Left colon (tissue), 2 donors: ENCODE measurements at regions of chr1 and their contacts with region 1.

Region 1: GRCh38 chr1:115138968-115139367 is 49.7 kb upstream of the TSPAN2 start:
- DNase-seq: peak; percentile 81 to 86
- ATAC-seq: peak; percentile 99

Region 2: DNA sequence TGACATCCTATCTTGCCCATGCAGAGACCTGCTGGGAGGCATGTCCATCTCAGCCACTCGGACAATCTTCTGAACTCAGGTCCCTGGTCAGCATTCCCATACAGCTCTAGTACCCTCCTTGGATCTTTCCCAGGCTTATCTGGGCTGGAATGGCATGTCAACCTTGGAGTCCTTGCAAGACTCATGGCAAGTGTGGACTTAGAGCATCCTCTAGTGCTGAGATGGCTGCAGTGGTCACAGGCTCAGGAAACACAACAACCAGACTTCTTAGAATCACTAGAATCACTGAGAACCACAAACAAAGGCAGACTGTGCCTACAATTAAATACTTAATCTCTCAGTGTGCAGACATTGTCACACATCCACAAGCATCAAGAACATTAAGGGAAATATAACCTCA is 182.4 kb before region 1 on chr1:
- intact Hi-C with region 1: no loop called
- DNase-seq: no peak
- ATAC-seq: no peak

Region 3: DNA sequence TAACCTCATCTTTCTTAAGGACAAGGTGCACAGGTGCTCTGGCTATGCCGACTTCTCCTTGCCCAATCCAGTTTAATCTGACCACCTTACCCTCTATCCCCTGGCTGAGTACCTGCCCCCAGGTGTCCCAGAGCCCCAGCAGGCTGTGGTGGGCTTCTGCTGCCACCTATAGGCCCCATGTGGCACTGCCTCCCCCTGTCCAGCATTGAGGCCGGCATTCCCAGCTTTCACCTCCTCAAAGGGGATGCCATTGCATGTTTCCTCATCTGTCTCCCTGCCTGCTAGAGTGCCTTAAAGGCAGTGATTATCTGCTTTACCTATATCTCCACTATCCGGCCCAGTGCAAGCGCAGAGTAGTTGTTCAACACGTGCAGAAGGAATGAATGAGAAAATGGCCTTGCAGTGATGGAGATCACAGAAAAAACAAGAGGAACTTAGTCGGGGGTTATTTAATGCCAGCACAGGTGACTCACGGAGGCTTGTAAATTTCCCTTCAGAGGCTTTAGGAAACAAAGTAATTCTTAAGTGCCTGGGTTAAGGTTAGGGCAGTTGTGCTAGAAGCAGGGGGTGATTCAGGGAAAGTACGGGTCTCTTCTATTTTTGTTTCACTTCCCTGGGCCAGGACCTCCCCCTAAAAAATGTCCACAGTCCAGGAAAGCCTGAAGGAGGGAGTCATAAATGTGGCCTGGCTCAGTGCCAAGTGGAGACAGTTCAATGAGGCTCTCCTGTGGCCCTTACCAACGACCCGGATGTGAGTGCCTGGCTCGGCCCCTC is 330.9 kb after region 1 on chr1:
- intact Hi-C with region 1: loop called in 1 of 2 experiments (anchors 2 kb)
- DNase-seq: peak; percentile 40 to 60
- ATAC-seq: peak; percentile 91

Region 4: GRCh38 chr1:115595279-115596079 is 456.5 kb after region 1 on chr1:
- intact Hi-C with region 1: loop called in 1 of 2 experiments (anchors 5 kb)
- DNase-seq: peak; percentile 63 to 84
- ATAC-seq: peak; percentile 84